HEK293 (cell line): ENCODE measurements at regions of chr17 and their contacts with region 1.

Region 1: DNA sequence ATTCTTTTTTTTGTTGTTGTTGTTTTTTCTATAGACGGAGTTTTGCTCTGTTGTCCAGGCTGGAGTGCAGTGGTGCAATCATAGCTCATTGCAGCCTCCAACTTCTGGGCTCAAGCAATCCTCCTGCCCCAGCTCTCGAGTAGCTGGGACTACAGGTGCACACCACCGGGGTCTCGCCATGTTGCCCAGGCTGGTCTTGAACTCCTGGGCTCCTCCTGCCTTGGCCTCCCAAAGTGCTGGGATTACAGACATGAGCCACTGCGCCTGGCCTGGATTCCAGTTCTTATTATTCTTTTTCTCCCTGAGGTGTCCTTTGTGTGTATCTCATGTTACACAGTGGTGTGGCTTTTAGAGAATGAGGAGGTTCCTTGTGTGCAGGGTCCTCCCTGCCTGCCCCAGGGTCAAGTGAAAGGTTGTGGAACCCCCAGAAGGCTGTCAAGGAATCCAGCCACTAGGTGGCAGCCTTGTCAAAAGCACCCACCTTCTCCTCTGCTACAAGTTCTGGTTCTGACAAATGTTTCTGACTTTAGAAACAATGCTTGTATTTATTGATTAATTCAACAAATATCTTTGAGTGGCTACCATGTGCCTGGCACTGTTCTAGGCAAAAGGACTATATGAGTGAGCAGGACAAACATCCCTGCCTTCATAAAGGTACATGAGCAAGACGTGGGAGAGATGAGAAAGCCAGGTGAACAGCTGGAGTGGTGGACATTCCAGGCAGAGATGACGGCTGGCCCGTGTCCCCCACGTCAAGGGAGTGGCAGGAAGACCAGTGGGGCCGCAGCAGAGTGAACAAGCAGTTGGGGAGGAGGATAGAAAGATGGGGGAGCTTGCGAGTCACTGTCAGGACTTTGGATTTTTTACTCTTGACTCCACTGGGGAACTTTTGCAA is 112.4 kb downstream of the SPECC1 start:
- H3K4me3 ChIP-seq: no peak overlapping the region
- H3K27ac ChIP-seq: no peak overlapping the region
- H3K4me1 ChIP-seq: no peaks in the 10 kb centered on the region
- CTCF ChIP-seq: peak; percentile 66

Region 2: DNA sequence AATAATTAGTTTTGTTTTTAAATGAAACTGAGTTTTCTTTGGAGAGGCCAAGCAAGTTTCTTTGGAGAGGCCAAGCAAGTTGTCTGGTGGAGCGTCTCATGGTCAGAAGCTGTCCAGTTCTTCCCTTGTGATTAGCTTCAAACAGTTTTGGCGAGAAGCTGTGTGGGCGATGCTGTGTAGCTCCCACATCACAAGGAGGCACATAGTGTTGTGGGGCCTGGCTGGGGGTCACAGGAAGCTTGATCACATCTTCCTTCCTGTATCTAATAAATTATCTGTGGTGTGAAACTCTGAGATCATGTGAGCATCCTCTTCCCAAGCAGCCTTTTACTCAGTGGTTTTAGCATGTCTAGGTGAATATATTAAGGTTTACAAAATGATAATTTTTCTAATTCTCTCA is 78.6 kb before region 1 on chr17:
- CTCF ChIA-PET with region 1: no interaction called
- POLR2A ChIA-PET with region 1: no interaction called
- H3K4me3 ChIP-seq: no peak overlapping the region
- H3K27ac ChIP-seq: no peak overlapping the region
- H3K4me1 ChIP-seq: peaks cover 9% of the 10 kb centered on the region
- CTCF ChIP-seq: no peak

Region 3: DNA sequence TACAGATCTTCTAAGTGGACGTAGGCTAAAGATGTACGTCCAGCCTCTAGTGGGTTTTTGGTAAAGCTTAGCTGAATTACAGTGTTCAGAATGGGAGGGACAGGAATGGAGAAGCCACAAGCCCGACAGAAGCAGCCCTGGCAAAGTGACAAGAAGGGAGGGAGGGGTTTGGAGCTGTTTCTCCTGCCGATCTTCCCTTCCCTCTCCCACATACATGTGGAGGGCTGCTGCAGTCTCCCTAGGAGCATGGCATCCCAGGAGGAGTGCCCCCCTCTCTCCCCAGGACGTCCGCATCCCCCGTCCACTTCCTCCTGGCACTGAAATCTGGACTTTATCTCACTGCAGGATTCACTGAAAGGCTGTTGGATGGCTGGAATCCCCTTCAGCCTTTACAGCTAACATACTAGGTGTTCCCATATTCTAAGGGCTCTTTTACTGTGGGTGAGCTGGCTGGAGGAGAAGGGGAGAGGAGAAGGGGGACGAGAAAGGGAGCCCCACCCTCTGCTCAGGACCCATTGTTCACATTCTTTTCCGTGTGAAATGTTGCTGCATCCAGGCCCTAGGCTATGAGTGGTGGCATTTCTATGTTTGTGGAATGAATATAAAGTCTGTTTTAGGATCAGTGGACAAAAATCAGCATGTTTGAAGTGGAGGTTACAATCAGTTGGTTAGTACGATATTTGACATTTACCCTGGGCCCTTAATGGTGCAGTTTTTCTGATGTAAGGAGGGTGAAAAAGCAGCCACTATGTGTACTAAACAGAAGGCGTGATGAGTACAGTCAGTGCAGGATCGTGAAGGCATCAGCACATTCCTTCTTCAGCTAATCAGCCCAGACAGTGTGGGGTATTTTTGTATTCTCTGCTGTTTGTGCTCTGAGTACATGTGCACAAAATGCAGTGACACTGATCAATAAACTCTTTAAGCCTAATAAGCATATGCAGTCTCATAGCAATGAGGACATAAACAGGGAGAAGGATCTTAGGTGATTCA is 17.9 kb before region 1 on chr17:
- CTCF ChIA-PET with region 1: interaction called, 14 read pairs
- POLR2A ChIA-PET with region 1: no interaction called
- H3K4me3 ChIP-seq: no peak overlapping the region
- H3K27ac ChIP-seq: no peak overlapping the region
- H3K4me1 ChIP-seq: no peaks in the 10 kb centered on the region
- CTCF ChIP-seq: no peak

Region 4: GRCh38 chr17:20315821-20316220 is 194.2 kb after region 1 on chr17:
- CTCF ChIA-PET with region 1: interaction called, 19 read pairs
- POLR2A ChIA-PET with region 1: no interaction called
- H3K4me3 ChIP-seq: no peak overlapping the region
- H3K27ac ChIP-seq: no peak overlapping the region
- H3K4me1 ChIP-seq: no peaks in the 10 kb centered on the region
- CTCF ChIP-seq: no peak